MCF 10A (cell line): ENCODE measurements at regions of chr4 and their contacts with region 1.

Region 1: GRCh38 chr4:70651864-70652506 is 14.3 kb downstream of the JCHAIN start:
- DNase-seq: peak; percentile 40
- H3K4me3 Mint-ChIP-seq: no peak overlapping the region
- H3K27ac Mint-ChIP-seq: no peak overlapping the region
- H3K4me1 Mint-ChIP-seq: no peaks in the 10 kb centered on the region
- H3K27me3 Mint-ChIP-seq: peaks cover 12% of the 10 kb centered on the region
- CTCF ChIP-seq: peak; percentile 69

Region 2: DNA sequence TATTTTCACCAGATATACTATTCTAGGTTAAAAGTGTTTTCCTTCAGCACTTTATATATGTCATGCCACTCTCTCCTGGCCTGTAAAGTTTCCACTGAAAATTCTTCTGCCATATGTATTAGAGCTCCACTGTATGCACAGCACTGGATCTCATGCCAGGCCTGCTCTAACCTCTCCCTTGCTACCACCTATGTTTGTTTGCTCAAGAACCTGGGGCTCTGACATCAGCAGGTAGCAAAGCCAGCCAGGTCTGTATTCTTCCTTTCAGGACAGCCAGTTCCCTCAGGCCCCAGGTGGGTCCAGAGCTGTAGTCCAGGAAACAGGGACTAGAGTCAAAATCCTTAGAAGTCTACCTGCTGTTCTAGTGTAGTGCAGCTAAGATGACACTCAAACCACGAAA is 199.0 kb before region 1 on chr4:
- CTCF ChIA-PET with region 1: no interaction called
- POLR2A ChIA-PET with region 1: no interaction called
- intact Hi-C with region 1: no loop called
- DNase-seq: no peak
- H3K4me3 Mint-ChIP-seq: no peak overlapping the region
- H3K27ac Mint-ChIP-seq: no peak overlapping the region
- H3K4me1 Mint-ChIP-seq: no peaks in the 10 kb centered on the region
- H3K27me3 Mint-ChIP-seq: no peaks in the 10 kb centered on the region
- CTCF ChIP-seq: no peak

Region 3: DNA sequence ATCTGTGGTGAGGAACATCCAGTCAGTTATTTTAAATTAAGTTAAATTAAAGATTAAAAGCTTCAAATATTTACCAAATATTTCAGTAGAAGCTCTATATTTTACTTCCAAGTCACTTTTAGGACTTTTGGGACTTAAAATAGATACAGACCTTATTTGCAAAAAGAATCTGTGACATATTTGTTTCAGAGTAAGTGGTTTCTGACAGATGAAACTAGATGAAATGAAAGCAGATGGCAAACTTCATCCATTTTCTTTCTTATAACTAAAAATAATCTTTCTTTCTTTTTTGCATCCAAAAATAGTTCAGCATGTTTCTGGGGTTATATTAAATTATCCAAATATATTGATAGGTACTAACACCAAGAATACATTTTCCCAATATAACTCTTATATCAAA is 29.7 kb after region 1 on chr4:
- CTCF ChIA-PET with region 1: interaction called, 11 read pairs
- POLR2A ChIA-PET with region 1: interaction called, 4 read pairs
- intact Hi-C with region 1: loop called (anchors 5 kb)
- DNase-seq: no peak
- H3K4me3 Mint-ChIP-seq: no peak overlapping the region
- H3K27ac Mint-ChIP-seq: no peak overlapping the region
- H3K4me1 Mint-ChIP-seq: no peaks in the 10 kb centered on the region
- H3K27me3 Mint-ChIP-seq: no peaks in the 10 kb centered on the region
- CTCF ChIP-seq: no peak

Region 4: DNA sequence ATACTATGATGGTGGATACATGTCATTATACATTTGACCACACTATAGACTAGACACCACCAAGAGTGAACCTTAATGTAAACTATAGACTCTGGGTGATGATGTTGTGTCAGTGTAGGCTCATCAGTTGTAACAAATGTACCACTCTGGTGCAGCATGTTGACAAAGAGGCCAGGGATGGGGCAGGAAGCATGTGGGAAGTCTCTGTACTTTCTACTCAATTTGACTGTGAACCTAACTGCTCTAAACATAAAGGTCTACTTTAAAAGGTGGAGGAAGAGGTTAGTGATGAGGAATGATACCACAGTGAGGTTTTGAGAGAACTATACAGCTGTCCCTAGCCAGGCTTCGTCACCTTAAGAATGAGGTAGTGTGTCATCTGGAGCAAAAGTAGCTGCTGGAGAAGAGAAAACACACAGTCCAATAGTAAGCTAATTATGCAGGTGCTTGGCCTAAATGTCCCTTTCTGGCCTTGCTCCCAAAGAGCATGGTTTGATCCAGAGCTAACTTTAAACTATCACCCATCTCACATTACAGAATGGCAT is 149.4 kb after region 1 on chr4:
- CTCF ChIA-PET with region 1: interaction called, 17 read pairs
- POLR2A ChIA-PET with region 1: no interaction called
- intact Hi-C with region 1: no loop called
- DNase-seq: no peak
- H3K4me3 Mint-ChIP-seq: no peak overlapping the region
- H3K27ac Mint-ChIP-seq: no peak overlapping the region
- H3K4me1 Mint-ChIP-seq: no peaks in the 10 kb centered on the region
- H3K27me3 Mint-ChIP-seq: no peaks in the 10 kb centered on the region
- CTCF ChIP-seq: no peak

Region 5: GRCh38 chr4:71009890-71010588 is 358.1 kb after region 1 on chr4:
- CTCF ChIA-PET with region 1: interaction called, 21 read pairs
- POLR2A ChIA-PET with region 1: no interaction called
- intact Hi-C with region 1: loop called (anchors 1 kb)
- DNase-seq: peak; percentile 46
- H3K4me3 Mint-ChIP-seq: no peak overlapping the region
- H3K27ac Mint-ChIP-seq: no peak overlapping the region
- H3K4me1 Mint-ChIP-seq: peaks cover 12% of the 10 kb centered on the region
- H3K27me3 Mint-ChIP-seq: no peaks in the 10 kb centered on the region
- CTCF ChIP-seq: peak; percentile 35

Region 6: DNA sequence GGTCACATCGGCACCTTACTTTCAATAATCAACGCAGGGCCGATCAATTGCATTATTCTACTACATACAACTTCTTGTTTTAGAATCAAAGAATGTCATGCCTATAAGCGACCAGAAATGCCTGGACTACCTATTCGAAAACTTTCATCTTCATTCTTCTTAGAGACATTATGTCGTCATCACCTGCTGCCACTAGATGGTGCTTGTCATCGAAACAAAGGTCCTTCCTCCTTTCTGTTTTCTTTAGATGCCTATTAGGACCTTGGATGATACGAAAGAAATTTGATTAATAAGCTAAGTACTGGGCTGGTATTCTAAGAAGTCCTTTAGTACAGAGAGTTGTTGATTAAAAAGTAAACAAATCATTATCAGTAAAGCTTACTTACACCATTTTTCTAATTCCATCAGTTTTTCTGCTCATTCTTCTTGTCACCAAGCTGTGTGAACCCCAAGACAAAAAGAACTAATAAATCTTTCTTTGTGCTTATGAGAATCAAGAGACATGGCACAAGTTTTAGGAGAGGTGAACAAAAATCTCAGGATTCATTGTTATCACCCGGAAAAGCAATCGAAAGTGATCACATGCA is 532.3 kb after region 1 on chr4:
- CTCF ChIA-PET with region 1: no interaction called
- POLR2A ChIA-PET with region 1: no interaction called
- intact Hi-C with region 1: loop called (anchors 10 kb)
- DNase-seq: peak; percentile 68
- H3K4me3 Mint-ChIP-seq: no peak overlapping the region
- H3K27ac Mint-ChIP-seq: no peak overlapping the region
- H3K4me1 Mint-ChIP-seq: no peaks in the 10 kb centered on the region
- H3K27me3 Mint-ChIP-seq: peaks cover 25% of the 10 kb centered on the region
- CTCF ChIP-seq: peak; percentile 56